ENCODE measurements at regions of chr1 and their contacts with region 1.

Region 1: DNA sequence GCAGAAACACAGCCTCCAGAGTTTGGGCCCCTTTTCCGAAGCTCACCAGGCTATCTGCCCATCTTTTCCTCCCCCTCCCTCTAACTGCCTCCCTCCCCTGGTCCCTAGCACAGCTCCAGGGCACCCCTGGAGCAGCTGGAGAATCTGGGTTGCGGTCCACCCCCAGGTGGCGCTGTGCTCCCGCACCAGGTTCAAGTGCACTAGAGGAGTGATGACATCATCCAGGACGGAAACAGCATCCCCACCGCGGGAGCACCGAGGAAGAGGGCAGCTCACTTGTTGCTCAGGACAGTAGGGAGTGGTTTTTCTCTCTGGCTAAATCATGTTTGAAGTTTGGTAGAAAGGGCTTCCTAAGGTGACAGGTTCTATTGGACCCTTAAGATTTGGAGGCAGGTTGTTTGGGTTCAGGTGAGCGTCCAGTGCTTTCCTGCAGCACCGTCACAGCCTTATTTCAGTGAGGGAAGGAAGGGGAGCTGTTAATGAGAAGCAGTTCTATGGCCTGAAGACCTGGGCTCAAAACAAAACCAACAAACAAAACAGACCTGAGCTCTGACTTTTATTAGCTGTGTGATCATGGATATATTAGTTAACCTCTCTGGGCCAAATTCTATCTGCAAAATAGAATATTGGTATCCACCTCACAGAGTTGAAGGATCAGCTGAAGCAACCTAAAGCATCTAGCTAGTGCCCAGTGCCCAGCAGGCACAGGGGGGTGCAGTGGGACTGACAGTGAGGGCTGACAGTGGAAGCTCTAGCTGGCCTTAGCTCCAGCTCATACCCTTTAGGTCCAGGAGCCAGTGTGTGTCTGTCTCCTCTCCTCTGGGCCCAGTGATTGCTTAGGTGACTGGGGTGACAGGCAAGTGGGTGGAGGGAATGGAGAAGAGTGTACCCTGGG is 7.5 kb downstream of the SHISA4 start:
- DNase-seq: no peak
- H3K4me3 ChIP-seq: no peak overlapping the region
- CTCF ChIP-seq: peak; percentile 99

Region 2: DNA sequence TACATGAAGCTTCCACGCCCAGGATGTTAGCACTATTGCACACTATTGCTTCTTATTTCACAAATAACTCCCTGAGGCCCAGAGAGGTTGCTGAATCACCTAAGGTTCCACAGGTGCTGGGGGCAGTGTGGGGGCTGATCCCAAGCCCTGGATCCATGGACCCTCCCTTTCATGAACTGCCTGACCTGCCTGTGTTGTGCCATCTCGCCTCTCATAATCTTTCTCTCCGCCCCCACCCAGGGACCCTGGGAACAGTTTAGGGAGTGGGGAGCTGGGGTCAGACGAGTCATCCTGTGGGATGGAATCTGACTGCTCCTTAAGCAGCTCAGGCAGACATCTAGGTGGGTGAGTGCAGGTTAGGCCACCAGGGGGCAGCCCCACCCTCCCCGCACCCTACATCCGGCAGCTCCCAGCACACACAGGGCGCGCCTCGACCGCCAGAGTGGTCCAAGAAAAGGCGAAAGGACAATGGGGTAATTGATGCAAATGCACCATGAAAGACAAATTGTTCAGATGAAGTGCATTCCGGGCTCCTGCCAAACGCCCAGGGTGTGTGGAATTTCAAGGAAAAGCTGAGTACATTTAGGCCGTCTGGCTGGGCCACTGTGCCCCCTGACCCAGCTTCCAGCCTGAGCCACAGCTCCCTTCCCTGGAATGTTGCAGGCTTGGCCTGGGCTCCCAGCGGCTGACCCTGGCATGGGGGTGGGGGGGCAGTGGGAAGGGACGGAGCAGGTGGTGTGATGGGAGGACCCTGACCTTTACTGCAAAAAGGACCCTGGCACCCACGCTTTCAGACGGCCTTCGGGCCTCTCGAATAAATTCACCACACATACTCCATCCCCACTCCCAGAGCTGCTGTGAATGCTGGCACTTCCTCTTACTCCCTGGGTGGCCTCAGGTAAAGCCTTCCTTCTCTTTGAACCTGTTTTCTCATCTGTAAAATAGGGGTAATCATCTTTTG is 448.0 kb before region 1 on chr1:
- CTCF ChIA-PET with region 1: no interaction called
- POLR2A ChIA-PET with region 1: no interaction called
- DNase-seq: no peak
- H3K4me3 ChIP-seq: no peak overlapping the region
- CTCF ChIP-seq: peak; percentile 90

Region 3: DNA sequence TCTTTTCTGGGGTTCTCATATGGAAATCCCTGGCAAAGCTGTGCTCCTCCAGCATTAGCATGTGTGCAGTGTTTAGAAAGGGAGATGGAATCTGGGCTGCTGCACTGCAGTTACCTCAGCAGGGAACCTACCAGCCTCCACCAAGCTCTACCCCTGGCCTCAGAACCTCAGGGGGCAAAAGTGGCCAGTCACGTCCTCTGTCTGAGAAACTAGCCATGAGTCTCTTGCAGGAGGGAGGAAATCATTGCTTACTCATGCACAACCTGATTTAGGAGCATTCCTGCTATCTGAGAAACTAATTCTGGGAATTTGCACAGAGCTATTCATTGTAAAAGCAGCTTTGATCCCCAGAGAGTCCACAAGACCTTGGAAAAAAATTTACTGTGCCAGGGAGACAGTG is 147.8 kb before region 1 on chr1:
- CTCF ChIA-PET with region 1: no interaction called
- POLR2A ChIA-PET with region 1: no interaction called
- DNase-seq: peak; percentile 95
- H3K4me3 ChIP-seq: no peak overlapping the region
- CTCF ChIP-seq: no peak

Region 4: DNA sequence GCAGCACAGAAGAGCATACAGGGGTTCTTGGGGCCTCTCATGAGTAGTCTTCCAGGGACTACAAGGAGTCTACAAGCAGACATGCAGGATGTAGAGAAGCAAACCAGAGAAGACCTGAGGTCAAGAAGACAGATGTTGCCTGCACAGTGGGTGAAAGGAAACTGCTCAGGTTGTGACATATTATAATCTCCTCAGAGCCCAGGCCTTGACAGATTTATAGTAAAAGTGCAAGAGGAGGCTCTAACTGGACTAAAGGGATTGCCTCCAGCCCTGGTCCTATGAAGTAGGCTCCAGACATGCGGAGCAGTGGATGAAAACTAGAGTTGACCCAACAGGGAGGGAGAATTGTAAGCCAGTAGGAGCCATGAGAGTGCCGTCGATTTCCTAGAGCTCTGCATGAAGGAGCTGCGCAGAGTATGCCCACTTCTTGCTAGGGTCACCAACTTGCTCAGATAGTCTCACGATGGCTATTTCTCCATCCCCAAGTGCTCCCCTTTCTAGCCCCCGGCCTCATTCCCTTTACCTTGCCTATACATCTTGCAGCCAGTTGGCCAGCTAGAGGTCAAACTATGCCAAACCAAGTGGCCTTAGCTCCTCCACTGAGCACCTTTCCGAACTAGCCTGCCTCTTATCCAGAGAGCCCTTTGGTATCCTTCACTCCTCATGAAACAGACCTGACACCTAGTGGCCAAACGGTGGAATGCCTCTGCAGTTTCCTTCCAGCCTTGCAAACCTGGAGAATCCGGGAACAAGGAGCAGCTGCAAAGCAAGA is 103.4 kb before region 1 on chr1:
- CTCF ChIA-PET with region 1: no interaction called
- POLR2A ChIA-PET with region 1: no interaction called
- DNase-seq: peak; percentile 37
- H3K4me3 ChIP-seq: no peak overlapping the region
- CTCF ChIP-seq: peak; percentile 91

Region 5: DNA sequence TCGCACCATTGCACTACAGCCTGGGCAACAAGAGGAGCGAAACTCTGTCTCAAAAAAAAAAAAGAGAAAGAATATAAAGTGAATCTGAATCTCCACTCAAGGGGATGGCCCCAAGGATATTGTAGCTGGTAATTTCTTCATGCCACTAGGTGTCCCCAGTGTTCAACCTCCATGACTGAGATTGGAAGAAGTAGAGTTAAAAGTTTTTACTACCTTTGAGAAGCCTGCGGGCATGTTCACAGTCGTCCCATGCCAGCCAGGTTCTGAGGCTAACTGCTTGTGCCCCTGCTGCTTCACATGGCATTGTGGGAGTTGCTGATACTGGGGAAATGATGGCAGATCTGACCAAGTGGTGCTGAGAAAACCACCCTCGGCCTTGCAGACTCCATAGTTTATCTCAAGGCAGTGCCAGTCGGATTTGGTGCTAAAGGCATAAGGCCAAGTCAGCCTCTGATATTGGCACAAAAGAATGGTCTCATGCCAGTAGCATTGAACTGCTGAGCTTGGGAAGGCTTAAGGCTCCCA is 18.2 kb before region 1 on chr1:
- CTCF ChIA-PET with region 1: interaction called, 75 read pairs
- POLR2A ChIA-PET with region 1: interaction called, 4 read pairs
- DNase-seq: no peak
- H3K4me3 ChIP-seq: no peak overlapping the region
- CTCF ChIP-seq: peak; percentile 66

Region 6: GRCh38 chr1:201916649-201917249 is 20.6 kb after region 1 on chr1:
- CTCF ChIA-PET with region 1: interaction called, 19 read pairs
- POLR2A ChIA-PET with region 1: no interaction called
- DNase-seq: no peak
- H3K4me3 ChIP-seq: peak overlapping the region; percentile 3; the same call in 1 of the 2 replicates
- CTCF ChIP-seq: no peak

Region 7: GRCh38 chr1:201946224-201946908 is 50.2 kb after region 1 on chr1 and contains the start of gene LMOD1:
- CTCF ChIA-PET with region 1: interaction called, 99 read pairs
- POLR2A ChIA-PET with region 1: interaction called, 15 read pairs
- DNase-seq: peak; percentile 95
- H3K4me3 ChIP-seq: peak within 1 kb of the TSS; percentile 85
- CTCF ChIP-seq: no peak

Region 8: GRCh38 chr1:201970334-201971159 is 74.4 kb after region 1 on chr1:
- CTCF ChIA-PET with region 1: interaction called, 656 read pairs
- POLR2A ChIA-PET with region 1: interaction called, 22 read pairs
- DNase-seq: no peak
- H3K4me3 ChIP-seq: no peak overlapping the region
- CTCF ChIP-seq: no peak

Region 9: GRCh38 chr1:201999625-202000238 is 103.6 kb after region 1 on chr1:
- CTCF ChIA-PET with region 1: interaction called, 50 read pairs
- POLR2A ChIA-PET with region 1: no interaction called
- DNase-seq: no peak
- H3K4me3 ChIP-seq: no peak overlapping the region
- CTCF ChIP-seq: peak; percentile 73

Measured in AG04449 (cell line).